ENCODE measurements at regions of chr13 and their contacts with region 1.

Region 1: GRCh38 chr13:95676762-95677563 is at the start of gene DNAJC3:
- DNase-seq: peak; percentile 98
- H3K4me3 Mint-ChIP-seq: peak within 1 kb of the TSS; percentile 95
- H3K27ac Mint-ChIP-seq: peak within 1 kb of the TSS; percentile 80
- H3K4me1 Mint-ChIP-seq: peaks cover 45% of the 10 kb centered on the region
- H3K27me3 Mint-ChIP-seq: no peaks in the 10 kb centered on the region
- total RNA-seq, gene DNAJC3: 28.1 and 28.6 TPM in 2 replicates

Region 2: DNA sequence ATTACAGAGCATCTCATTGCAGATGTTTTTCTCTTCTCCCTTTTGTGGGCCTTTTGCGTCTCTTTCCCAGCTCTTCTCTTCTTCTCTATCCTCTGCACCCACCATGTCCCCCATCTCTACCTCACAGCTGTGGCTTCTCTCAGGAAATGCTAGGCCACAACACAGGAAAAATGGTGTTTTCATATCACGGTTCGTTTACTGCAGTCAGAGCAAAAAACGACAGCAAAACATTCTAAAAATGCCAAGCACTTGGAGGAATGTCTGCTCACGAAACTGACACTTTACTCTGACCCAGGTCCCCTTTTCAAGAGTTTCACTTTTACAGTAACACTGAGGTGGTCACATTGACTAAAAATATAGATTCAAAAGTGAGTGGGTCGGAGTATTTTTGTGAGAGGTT is 1349.6 kb before region 1 on chr13:
- intact Hi-C with region 1: loop called (anchors 2 kb)
- DNase-seq: no peak
- H3K4me3 Mint-ChIP-seq: peak overlapping the region; percentile 45
- H3K27ac Mint-ChIP-seq: no peak overlapping the region
- H3K4me1 Mint-ChIP-seq: peaks cover 52% of the 10 kb centered on the region
- H3K27me3 Mint-ChIP-seq: peaks cover 6% of the 10 kb centered on the region

Region 3: DNA sequence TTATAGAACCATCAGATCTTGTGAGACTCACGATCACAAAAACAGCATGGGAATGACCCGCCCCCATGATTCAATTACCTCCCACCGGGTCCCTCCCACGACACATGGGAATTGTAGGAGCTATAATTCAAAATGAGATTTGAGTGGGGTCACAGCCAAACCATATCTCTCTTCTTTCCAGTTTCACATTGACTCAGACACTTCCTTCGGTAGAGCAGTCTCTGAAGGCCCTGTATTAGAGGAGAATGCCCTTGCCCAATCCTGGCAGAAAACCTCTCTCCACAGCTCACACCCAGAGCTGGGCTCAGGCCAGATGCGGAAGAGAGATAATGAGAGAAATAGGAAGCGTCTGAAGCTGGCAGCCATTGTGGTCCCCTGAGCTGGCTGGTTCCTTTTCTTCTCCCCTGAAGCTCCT is 196.8 kb before region 1 on chr13:
- intact Hi-C with region 1: loop called (anchors 10 kb)
- DNase-seq: no peak
- H3K4me3 Mint-ChIP-seq: no peak overlapping the region
- H3K27ac Mint-ChIP-seq: no peak overlapping the region
- H3K4me1 Mint-ChIP-seq: peaks cover 17% of the 10 kb centered on the region
- H3K27me3 Mint-ChIP-seq: peaks cover 6% of the 10 kb centered on the region

Region 4: DNA sequence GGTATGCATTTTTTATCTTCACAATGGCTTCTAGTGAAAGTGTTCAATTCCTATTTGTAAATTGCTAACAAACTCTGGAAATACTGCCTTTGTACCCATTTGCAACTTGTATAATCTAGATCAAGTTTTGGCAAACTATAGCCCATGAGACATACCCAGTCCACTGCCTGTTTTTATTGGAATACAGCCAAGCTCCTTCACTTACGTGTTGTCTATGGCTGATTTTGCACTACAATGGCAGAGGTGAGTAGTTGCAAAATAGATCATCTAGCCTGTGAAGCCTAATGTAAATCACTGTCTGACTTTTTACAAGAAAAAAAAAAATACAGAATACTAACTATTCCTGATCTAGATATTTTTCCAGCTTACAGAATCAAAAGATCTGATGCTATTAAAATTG is 69.6 kb before region 1 on chr13:
- intact Hi-C with region 1: no loop called
- DNase-seq: no peak
- H3K4me3 Mint-ChIP-seq: no peak overlapping the region
- H3K27ac Mint-ChIP-seq: no peak overlapping the region
- H3K4me1 Mint-ChIP-seq: no peaks in the 10 kb centered on the region
- H3K27me3 Mint-ChIP-seq: peaks cover 4% of the 10 kb centered on the region

Region 5: DNA sequence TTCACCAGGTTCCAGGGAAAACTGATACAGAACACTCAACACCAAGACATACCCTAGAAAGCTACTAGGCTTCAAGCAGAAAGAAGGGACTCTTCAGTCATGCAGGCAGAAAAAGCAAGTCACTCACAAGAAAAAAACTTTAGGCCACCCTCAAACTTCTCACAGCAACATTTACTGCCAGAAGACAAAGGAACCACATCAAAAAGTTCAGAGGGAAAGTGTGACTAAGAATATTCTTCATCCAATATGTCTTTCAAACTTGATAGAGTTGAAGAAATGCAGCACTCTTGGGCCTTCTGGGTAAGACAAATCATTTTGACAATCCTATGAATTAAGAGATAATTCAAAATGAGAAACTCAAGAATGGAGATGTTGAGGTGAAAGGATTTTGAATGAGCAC is 40.1 kb before region 1 on chr13:
- intact Hi-C with region 1: loop called (anchors 5 kb)
- DNase-seq: no peak
- H3K4me3 Mint-ChIP-seq: no peak overlapping the region
- H3K27ac Mint-ChIP-seq: no peak overlapping the region
- H3K4me1 Mint-ChIP-seq: peaks cover 7% of the 10 kb centered on the region
- H3K27me3 Mint-ChIP-seq: peaks cover 28% of the 10 kb centered on the region

Region 6: DNA sequence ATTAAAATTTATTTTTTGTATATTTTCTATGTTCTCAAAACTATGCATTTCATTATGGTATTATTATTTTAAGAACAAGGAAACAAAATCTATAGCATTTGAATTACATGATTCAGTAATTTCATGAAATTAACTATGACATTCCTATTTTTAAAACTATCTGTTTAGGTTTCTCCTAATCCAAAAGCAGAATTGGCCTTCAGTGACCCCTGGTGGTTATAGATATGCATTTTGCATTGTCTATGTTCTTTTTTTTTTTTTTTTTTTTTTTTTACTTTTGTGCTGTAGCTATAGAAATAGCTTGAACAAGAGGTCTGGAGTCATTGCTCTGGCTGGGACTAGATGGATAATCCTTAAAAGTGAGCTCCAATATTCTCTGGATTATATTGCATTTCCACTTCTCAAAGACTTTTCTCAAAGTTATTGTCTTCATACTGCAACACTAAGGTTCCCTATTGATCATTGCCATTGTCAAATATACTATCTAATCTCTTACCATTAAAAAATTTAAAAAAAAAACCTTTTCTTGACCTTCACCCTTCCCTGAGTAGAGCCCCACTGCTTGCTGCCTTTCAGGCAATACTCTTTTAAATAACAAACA is 15.9 kb before region 1 on chr13:
- intact Hi-C with region 1: no loop called
- DNase-seq: no peak
- H3K4me3 Mint-ChIP-seq: no peak overlapping the region
- H3K27ac Mint-ChIP-seq: no peak overlapping the region
- H3K4me1 Mint-ChIP-seq: no peaks in the 10 kb centered on the region
- H3K27me3 Mint-ChIP-seq: peaks cover 23% of the 10 kb centered on the region

Region 7: DNA sequence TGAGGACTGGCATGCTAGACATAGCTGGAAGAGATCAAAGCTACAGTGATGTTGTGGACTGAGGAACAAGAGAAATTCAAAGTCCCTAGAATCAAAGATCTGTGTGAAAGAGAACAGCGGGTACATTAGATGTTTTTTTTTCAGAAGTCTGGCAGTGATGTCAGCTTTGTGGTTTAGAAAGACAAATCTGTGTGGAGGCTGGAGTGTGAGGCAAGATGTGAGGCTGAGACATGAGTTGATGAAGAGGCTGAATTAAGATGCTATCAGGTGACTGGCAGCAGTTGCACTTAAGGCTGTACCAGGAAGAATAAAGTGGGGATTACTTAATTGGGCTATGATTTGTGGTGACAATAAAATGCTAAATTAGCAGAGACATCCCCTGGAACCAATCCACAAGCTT is 46.5 kb after region 1 on chr13:
- intact Hi-C with region 1: loop called (anchors 10 kb)
- DNase-seq: no peak
- H3K4me3 Mint-ChIP-seq: no peak overlapping the region
- H3K27ac Mint-ChIP-seq: no peak overlapping the region
- H3K4me1 Mint-ChIP-seq: peaks cover 5% of the 10 kb centered on the region
- H3K27me3 Mint-ChIP-seq: no peaks in the 10 kb centered on the region

Region 8: DNA sequence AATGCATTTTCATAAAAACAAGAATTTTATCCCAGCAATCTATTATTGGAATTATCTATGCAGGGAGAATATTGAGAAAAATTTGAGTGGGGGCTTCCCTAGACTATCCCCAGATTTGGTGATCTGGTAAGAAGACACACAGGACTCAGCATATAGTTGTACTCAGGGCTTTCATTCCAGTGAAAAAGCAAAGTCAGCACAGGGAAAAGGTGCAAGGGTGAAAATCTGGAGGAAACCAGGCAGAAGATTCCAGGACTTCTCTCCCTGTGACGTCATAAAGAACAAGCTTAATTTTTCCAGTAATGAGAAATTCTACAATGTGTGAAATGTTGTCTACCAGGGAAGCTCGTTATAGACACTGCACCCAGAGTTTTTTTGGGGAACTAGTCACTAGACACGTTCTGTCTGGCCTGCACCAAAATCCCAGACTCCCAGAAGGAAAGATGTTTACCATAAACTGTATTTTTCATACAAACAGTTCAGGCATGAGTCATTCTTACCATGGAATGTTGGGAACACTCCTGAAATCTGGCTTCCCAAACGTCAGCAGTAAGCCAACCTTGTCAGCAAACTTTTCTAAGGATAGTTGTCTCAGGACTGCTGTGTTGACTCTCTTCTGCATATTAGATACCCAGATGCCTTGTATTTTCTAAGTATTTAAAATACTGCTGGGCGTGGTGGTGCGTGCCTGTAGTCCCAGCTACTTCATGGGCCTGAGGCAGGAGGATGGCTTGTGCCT is 107.4 kb after region 1 on chr13:
- intact Hi-C with region 1: loop called (anchors 10 kb)
- DNase-seq: no peak
- H3K4me3 Mint-ChIP-seq: no peak overlapping the region
- H3K27ac Mint-ChIP-seq: no peak overlapping the region
- H3K4me1 Mint-ChIP-seq: no peaks in the 10 kb centered on the region
- H3K27me3 Mint-ChIP-seq: no peaks in the 10 kb centered on the region